HEK293 (cell line): ENCODE measurements at regions of chr11 and their contacts with region 1.

Region 1: DNA sequence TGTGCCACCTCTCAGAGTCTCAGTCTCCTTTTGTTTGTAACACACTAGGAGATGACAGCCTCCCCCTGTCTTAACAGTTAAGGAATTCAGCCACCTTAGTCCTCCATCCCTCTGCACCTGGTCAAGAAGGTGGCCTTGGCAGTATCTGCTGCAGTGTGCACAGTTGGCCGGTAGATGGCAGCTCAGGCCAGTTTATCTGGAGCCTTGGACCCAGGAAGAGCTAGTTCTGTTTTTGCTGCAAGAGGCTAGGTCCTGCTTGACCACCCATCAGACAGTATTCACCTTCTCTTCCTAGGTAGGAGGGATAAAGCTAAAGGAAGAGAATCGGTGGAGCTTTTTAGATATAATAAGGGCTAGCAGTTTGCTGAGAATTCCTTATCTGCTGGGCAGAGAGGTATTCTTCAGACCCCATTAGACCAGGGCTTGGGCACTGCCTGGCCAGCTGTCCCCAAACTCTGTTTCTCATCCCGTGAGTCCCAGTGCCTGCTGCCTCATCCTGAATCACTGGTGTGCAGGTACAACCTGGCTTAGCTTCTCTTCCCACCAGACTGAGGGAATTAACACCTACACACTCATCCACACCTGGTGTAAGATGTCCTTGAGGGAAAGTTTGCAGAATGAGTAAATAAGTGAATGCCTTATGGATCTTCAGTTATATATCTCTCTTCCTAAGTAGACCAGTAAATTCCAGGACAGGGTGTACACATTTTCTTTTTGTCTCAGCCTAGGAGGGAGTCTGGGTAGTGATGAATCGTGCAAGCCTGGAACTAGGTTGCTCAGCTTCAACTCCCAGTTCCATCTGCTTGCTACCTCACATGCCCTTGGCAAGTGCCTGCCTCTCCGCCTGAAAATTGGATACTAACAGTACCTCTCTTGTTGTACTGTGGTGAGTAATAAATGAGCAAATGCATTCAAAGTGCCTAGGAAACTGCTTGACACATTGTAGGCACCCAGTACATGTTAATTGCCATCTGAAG is 70.8 kb upstream of the NARS2 start:
- H3K4me3 ChIP-seq: no peak overlapping the region
- H3K27ac ChIP-seq: no peak overlapping the region
- H3K4me1 ChIP-seq: no peaks in the 10 kb centered on the region
- CTCF ChIP-seq: peak; percentile 84

Region 2: DNA sequence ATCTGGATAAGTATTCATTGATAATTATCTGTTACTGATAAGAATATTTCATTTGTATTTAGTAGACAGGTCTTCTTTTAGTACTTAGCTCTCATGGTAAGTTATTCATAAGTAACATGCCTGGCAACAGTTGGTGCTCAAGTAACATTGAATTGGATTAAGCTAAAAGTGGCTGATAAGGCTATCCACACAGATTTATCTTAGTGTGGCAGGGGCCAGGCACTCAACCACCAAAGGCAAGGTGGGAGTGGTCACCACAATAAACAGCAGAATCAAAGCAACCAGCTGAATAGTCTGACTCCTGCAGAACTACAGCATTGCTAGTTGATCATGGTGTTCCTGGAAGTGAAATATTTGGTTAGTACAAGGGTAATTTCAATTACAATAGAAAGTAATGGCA is 37.8 kb before region 1 on chr11:
- CTCF ChIA-PET with region 1: no interaction called
- POLR2A ChIA-PET with region 1: no interaction called
- H3K4me3 ChIP-seq: no peak overlapping the region
- H3K27ac ChIP-seq: no peak overlapping the region
- H3K4me1 ChIP-seq: no peaks in the 10 kb centered on the region
- CTCF ChIP-seq: no peak

Region 3: GRCh38 chr11:78659326-78660270 is 14.1 kb after region 1 on chr11:
- CTCF ChIA-PET with region 1: interaction called, 25 read pairs
- POLR2A ChIA-PET with region 1: no interaction called
- H3K4me3 ChIP-seq: no peak overlapping the region
- H3K27ac ChIP-seq: no peak overlapping the region
- H3K4me1 ChIP-seq: no peaks in the 10 kb centered on the region
- CTCF ChIP-seq: no peak

Region 4: GRCh38 chr11:78688464-78688863 is 43.0 kb after region 1 on chr11:
- CTCF ChIA-PET with region 1: interaction called, 17 read pairs
- POLR2A ChIA-PET with region 1: no interaction called
- H3K4me3 ChIP-seq: no peak overlapping the region
- H3K27ac ChIP-seq: no peak overlapping the region
- H3K4me1 ChIP-seq: no peaks in the 10 kb centered on the region
- CTCF ChIP-seq: no peak

Region 5: GRCh38 chr11:78722786-78723185 is 77.3 kb after region 1 on chr11:
- CTCF ChIA-PET with region 1: interaction called, 19 read pairs
- POLR2A ChIA-PET with region 1: no interaction called
- H3K4me3 ChIP-seq: no peak overlapping the region
- H3K27ac ChIP-seq: no peak overlapping the region
- H3K4me1 ChIP-seq: no peaks in the 10 kb centered on the region
- CTCF ChIP-seq: no peak

Region 6: GRCh38 chr11:78798660-78799059 is 153.1 kb after region 1 on chr11:
- CTCF ChIA-PET with region 1: interaction called, 30 read pairs
- POLR2A ChIA-PET with region 1: no interaction called
- H3K4me3 ChIP-seq: no peak overlapping the region
- H3K27ac ChIP-seq: no peak overlapping the region
- H3K4me1 ChIP-seq: peaks cover 13% of the 10 kb centered on the region
- CTCF ChIP-seq: peak; percentile 74

Region 7: GRCh38 chr11:79052544-79052943 is 407.0 kb after region 1 on chr11:
- CTCF ChIA-PET with region 1: interaction called, 23 read pairs
- POLR2A ChIA-PET with region 1: no interaction called
- H3K4me3 ChIP-seq: no peak overlapping the region
- H3K27ac ChIP-seq: no peak overlapping the region
- H3K4me1 ChIP-seq: no peaks in the 10 kb centered on the region
- CTCF ChIP-seq: peak; percentile 23; the same call in 1 of the 2 replicates

Region 8: GRCh38 chr11:79100093-79100910 is 454.8 kb after region 1 on chr11:
- CTCF ChIA-PET with region 1: interaction called, 73 read pairs
- POLR2A ChIA-PET with region 1: no interaction called
- H3K4me3 ChIP-seq: no peak overlapping the region
- H3K27ac ChIP-seq: no peak overlapping the region
- H3K4me1 ChIP-seq: no peaks in the 10 kb centered on the region
- CTCF ChIP-seq: no peak; the same call in 1 of the 2 replicates